Sigmoid colon (tissue), 7 donors: ENCODE measurements at regions of chr1 and their contacts with region 1.

Region 1: DNA sequence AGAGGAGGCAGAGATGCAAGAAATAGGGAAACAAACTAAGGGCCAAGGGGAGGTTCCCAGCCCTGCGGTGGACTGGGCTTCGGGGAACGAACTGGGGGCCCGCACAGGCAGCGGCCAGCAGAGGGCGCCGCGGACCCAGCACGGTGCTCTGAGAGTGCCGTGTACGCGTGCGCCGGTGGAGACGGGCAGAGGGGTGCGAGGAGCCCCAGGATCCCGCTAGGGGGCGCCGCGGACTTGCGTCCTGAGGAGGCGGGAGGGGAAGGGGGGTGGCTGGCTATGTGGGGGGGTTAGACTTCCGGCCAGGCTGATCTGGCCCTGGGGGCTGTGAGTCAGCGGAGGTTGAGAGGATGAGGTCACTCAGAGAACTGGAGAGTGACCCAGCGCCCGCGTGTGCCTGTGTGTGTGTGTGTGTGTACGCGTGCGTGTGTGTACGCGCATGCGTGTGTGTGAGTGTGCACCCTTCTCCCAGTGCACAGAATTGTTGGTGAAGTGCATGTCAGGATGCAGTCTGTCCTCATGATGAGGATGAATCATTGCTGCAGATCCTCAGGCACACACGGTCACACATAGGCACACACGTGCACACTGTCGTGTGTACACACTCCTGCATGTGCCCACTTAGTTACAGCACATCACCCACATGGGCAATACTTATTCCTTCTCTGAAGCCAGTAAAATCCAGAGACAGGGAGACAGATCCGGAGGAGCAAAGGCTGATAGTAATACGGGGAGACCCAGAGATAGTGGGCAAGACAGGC is 17.0 kb downstream of the NES start:
- DNase-seq: peak; percentile 98
- H3K4me3 ChIP-seq: peak overlapping the region in 2 of 4 donors; percentile 16 to 20
- H3K27ac ChIP-seq: peak overlapping the region; percentile 77 to 86 (median 80)
- H3K4me1 ChIP-seq: peaks cover 0 to 83% (median 77%) of the 10 kb centered on the region in 4 donors
- H3K27me3 ChIP-seq: no peaks in the 10 kb centered on the region
- CTCF ChIP-seq: peak; percentile 98 to 100 (median 100)
- EP300 ChIP-seq: no peak
- POLR2A ChIP-seq: no peak

Region 2: DNA sequence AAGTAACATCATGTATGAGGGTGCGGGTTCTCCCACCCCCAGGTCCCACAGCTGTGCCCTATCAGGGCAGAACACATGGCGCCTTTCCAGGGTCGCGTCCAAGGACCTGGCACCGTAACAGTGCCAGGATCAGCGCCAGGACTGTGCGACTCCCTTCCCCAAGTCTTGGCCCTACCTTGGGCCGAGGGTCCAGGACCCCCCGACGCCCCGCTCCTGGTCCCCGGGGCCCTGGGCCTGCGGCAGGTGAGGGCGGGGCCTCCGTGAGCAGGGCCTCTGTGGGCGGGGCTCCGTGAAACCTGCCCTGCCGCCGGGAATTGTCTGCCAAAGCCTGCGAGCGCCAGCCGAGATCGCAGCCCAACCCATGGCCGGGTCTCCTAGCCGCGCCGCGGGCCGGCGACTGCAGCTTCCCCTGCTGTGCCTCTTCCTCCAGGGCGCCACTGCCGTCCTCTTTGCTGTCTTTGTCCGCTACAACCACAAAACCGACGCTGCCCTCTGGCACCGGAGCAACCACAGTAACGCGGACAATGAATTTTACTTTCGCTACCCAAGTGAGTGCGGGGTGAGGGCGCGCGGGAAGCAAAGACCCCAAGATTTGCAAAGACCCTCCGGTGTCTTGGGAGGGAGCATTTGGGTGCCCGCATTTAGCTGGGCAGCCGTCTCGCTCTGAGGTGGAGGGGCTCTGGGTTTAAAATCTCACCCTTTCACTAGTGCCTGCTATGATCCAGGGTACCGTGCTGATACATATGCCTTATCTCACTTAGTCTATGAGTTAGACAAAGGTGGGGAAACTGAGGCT is 291.1 kb before region 1 on chr1 and contains the start of gene RHBG:
- intact Hi-C with region 1: no loop called
- DNase-seq: no peak
- H3K4me3 ChIP-seq: peak within 1 kb of the TSS in 2 of 4 donors; percentile 27 to 28
- H3K27ac ChIP-seq: no peak within 1 kb of the TSS
- H3K4me1 ChIP-seq: peaks cover 0 to 10% (median 6%) of the 10 kb centered on the region in 4 donors
- H3K27me3 ChIP-seq: peaks cover 8 to 73% (median 19%) of the 10 kb centered on the region in 3 donors
- CTCF ChIP-seq: no peak
- EP300 ChIP-seq: no peak
- POLR2A ChIP-seq: no peak
- total RNA-seq, gene RHBG: not detected

Region 3: GRCh38 chr1:156583821-156584622 is 76.2 kb before region 1 on chr1:
- intact Hi-C with region 1: loop called (anchors 2 kb)
- DNase-seq: peak; percentile 87
- H3K4me3 ChIP-seq: no peak overlapping the region
- H3K27ac ChIP-seq: no peak overlapping the region
- H3K4me1 ChIP-seq: peaks cover 0 to 7% (median 0%) of the 10 kb centered on the region in 4 donors
- H3K27me3 ChIP-seq: no peaks in the 10 kb centered on the region
- CTCF ChIP-seq: peak; percentile 80 to 94 (median 88)
- EP300 ChIP-seq: no peak
- POLR2A ChIP-seq: no peak

Region 4: GRCh38 chr1:156612666-156613065 is 47.5 kb before region 1 on chr1:
- intact Hi-C with region 1: no loop called
- DNase-seq: no peak
- H3K4me3 ChIP-seq: no peak overlapping the region
- H3K27ac ChIP-seq: no peak overlapping the region
- H3K4me1 ChIP-seq: peaks cover 0 to 33% (median 29%) of the 10 kb centered on the region in 4 donors
- H3K27me3 ChIP-seq: no peaks in the 10 kb centered on the region
- CTCF ChIP-seq: no peak
- EP300 ChIP-seq: no peak
- POLR2A ChIP-seq: no peak

Region 5: GRCh38 chr1:156625436-156626078 is 34.6 kb before region 1 on chr1:
- intact Hi-C with region 1: loop called (anchors 1 kb)
- DNase-seq: peak; percentile 73
- H3K4me3 ChIP-seq: peak overlapping the region; percentile 2 to 44 (median 34)
- H3K27ac ChIP-seq: no peak overlapping the region
- H3K4me1 ChIP-seq: peaks cover 0 to 25% (median 23%) of the 10 kb centered on the region in 4 donors
- H3K27me3 ChIP-seq: peaks cover 32 to 86% (median 49%) of the 10 kb centered on the region in 3 donors
- CTCF ChIP-seq: peak; percentile 75 to 84 (median 82)
- EP300 ChIP-seq: no peak
- POLR2A ChIP-seq: no peak

Region 6: DNA sequence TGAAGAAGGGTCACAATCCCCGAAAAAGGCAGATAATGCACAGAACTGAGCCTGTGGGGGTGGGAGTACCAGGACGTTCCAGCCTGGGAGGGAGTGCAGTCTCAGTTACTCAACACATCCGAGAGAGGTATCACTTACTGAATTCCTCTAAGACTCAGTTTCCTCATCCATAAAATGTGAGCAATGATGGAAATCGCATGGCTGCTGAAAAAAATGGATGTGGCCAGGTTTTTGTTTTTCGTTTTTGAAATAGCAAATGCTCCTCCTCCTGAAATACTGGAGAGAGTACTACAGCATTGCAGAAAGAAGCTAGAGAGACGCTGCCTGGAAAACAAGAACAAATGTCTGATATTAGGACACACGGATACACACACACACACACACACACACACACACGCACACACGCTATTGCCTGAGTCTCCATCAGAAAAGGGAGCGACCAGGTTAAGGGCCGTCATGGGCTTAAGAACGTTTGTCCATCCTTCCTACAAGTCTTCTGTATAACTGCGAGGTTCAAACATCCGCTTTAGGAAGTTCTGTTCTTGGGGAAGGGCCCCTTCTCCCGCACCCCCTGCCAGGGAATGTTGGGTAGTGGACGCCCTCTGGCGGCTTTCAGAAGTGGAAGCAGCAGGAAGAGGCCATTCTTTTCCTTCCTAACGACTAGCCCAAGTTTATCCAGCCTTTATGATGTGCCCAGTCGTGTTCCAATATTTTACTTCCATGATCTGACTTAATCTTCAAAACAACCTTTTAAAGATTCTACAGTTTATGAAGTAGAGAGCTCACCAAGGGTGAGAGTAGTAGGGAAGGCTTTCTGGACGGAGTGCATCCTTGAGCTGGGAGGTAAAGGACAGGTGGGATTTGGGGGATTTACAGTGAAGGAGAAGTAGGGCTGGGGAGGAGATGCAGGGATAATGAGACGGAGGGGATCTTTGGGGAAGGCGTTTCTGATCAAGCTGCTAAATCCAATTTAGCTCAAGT is 17.7 kb after region 1 on chr1:
- intact Hi-C with region 1: loop called (anchors 1 kb)
- DNase-seq: peak; percentile 88
- H3K4me3 ChIP-seq: peak overlapping the region; percentile 29 to 53 (median 44)
- H3K27ac ChIP-seq: peak overlapping the region; percentile 42 to 79 (median 72)
- H3K4me1 ChIP-seq: peaks cover 0 to 43% (median 33%) of the 10 kb centered on the region in 4 donors
- H3K27me3 ChIP-seq: peaks cover 5 to 46% (median 20%) of the 10 kb centered on the region in 3 donors
- CTCF ChIP-seq: peak; percentile 84 to 93 (median 89)
- EP300 ChIP-seq: no peak
- POLR2A ChIP-seq: no peak